HEK293T (cell line): ENCODE measurements at regions of chr1 and their contacts with region 1.

Region 1: GRCh38 chr1:153922972-153923925 is at the start of gene GATAD2B:
- DNase-seq: peak; percentile 99

Region 2: GRCh38 chr1:153880962-153881361 is 42.3 kb before region 1 on chr1:
- CTCF ChIA-PET with region 1: interaction called, 3 read pairs
- POLR2A ChIA-PET with region 1: interaction called, 25 read pairs
- DNase-seq: peak; percentile 78

Region 3: DNA sequence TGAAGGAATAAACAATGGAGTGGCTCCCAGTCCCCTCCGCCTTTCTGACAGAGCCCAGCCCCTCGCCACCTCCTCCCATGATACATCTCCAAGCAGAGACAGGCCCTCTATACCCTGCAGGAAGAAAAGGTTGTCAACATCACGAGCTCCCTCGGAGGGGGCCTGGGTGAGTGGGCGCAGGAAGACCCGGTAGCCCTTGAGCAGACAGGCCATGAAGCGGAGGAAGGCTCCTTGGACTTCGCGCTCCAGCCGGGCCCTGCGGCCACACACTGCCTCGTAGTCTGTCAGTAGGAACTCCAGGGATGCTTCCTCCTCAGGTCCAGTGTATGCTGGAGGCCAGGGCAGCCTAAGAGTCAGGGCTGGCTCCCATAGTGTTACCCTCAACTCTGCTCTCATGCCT is 16.2 kb after region 1 on chr1:
- CTCF ChIA-PET with region 1: no interaction called
- POLR2A ChIA-PET with region 1: interaction called, 40 read pairs
- DNase-seq: no peak

Region 4: GRCh38 chr1:153946622-153947241 is 23.5 kb after region 1 on chr1 and contains the start of gene DENND4B:
- CTCF ChIA-PET with region 1: interaction called, 5 read pairs
- POLR2A ChIA-PET with region 1: interaction called, 40 read pairs
- DNase-seq: peak; percentile 98

Region 5: DNA sequence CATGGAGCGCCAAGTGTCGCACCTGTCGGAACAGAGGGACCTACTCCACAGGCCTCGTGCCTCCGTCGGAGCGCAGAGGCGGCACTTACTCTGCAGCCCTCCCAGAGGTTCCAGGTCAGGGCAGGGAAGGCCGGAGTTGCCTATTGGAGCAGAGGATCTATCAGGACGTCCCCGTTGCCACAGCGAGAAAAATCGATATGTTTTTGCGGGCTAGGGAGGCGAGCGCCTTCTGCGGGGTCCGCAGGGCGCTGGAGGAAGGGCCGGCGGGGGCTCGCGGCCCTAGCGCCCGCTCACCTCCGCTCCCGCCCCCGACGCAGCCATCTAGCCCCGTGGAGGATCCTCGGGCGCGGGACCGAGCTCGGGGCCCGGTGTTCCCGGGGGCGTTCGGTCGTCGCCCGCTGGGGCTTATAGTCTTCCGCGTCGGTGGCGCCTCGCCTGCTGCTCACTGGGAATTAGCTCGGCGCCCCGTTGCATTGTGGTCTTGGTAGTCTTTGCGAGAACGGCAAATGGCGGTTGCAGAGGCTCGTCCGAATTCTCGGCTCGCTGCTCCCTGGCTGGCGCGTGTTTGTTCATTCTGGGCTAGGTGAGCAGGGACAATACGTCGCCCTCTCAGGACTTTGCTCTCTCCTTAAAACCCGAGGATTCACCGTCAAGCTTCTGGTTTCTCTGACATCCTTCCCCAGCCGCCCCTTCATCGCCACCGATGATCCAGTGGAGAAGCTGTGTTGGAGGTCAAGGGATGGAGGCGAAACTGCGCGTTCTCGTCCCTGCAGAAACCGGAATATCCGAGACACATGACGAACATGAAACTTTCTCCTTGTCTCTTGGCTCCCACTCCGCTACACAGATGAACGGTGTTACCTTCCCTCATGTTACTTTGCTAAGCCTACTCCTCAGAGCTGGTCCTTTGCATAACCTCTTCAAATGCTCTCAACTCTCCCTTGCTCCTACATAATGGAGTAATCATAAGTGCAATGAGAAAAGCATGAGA is 54.3 kb after region 1 on chr1 and contains the start of gene JTB:
- CTCF ChIA-PET with region 1: interaction called, 3 read pairs
- POLR2A ChIA-PET with region 1: interaction called, 30 read pairs
- DNase-seq: peak; percentile 89

Region 6: GRCh38 chr1:154000420-154000819 is 77.2 kb after region 1 on chr1:
- CTCF ChIA-PET with region 1: no interaction called
- POLR2A ChIA-PET with region 1: no interaction called
- DNase-seq: no peak